ENCODE measurements at regions of chr1 and their contacts with region 1.

Region 1: DNA sequence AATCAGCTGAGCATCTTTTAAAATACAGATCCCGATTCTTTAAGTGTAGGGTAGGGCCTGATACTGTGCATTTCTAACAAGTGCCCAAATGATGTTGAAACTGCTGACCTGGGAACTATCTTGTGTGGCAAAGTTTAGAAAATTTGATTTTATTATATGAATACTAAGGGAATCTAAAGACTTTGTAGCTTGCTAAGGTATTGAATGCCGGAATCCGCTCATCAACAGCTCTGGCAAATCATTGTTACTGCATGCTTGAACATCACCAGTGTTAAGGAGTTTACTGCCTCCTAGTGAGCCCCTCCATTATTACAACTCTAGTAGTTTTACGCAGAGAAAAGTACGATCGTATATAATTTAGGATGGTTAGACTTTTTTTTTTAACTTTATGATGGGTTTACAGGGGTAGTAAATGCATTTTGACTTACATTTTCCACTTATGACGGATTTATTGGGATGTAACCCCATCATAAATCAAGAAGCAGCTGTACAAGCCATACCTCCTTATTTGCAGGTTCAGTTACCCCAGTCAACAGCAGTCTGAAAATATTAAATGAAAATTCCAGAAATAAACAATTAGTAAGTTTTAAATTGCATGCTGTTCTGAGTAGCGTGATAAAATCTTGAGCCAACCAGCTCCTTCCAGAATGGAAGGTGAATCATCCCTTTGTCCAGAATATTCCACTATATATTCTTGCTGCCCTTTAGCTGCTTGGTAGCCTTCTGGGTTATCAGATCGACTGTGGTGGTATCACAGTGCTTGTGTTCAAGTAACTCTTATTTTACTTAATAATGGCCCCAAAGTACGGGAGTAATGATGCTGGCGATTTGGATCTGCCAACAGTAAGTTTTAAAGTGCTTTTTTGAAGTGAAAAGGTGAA is 892 bp downstream of the TYW3 start:
- DNase-seq: peak; percentile 87
- H3K4me3 Mint-ChIP-seq: peak overlapping the region; percentile 96
- H3K27ac Mint-ChIP-seq: peak overlapping the region; percentile 99
- H3K4me1 Mint-ChIP-seq: peaks cover 33% of the 10 kb centered on the region
- H3K27me3 Mint-ChIP-seq: no peaks in the 10 kb centered on the region

Region 2: DNA sequence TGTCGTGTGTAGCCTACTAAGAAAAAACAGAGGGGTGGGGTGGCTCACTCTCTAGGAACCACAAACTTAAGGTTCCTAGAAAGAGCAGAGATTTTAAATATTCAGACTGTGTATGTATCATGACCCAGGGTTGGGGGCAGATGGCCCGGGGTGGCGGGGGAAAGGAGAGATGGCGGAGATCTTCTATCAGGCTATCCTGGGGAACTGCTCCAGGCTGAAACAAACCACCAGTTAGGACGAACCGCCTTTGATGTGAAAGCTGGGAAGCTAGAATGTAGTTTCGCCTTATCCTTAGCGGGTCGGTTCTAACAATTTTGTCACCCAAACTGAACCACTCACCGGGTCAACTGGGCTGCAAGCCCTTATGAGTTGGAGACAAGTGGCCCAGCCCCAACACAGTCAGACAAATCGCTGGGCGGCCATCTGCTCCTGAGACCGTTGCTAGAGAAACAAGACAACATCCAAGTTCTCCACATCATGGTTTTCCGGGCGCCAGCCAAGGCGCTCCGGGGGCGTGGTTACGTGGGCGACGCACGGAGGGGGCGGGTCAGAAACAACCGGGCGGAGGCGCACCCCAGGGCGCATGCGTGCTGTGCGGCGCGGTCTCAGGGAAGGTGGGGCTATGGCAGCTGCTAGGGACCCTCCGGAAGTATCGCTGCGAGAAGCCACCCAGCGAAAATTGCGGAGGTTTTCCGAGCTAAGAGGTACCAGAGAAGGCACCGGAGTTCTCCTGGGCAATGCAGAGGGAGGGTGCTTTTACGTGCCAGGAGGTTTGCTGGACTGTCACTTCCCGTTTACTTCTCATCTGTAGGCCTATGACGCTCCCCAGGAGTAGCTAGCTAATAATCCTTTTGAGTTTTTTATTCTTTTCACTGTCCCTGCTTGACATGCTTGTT is 535.9 kb before region 1 on chr1 and contains the starts of genes FPGT and LRRIQ3:
- intact Hi-C with region 1: loop called (anchors 2 kb)
- DNase-seq: peak; percentile 99
- H3K4me3 Mint-ChIP-seq: peak within 1 kb of the TSS; percentile 89
- H3K27ac Mint-ChIP-seq: peak within 1 kb of the TSS; percentile 93
- H3K4me1 Mint-ChIP-seq: peaks cover 19% of the 10 kb centered on the region
- H3K27me3 Mint-ChIP-seq: peaks cover 5% of the 10 kb centered on the region
- total RNA-seq, gene FPGT: 11.0 and 11.6 TPM in 2 replicates
- total RNA-seq, gene LRRIQ3: 0.17 and 0.35 TPM in 2 replicates

Region 3: DNA sequence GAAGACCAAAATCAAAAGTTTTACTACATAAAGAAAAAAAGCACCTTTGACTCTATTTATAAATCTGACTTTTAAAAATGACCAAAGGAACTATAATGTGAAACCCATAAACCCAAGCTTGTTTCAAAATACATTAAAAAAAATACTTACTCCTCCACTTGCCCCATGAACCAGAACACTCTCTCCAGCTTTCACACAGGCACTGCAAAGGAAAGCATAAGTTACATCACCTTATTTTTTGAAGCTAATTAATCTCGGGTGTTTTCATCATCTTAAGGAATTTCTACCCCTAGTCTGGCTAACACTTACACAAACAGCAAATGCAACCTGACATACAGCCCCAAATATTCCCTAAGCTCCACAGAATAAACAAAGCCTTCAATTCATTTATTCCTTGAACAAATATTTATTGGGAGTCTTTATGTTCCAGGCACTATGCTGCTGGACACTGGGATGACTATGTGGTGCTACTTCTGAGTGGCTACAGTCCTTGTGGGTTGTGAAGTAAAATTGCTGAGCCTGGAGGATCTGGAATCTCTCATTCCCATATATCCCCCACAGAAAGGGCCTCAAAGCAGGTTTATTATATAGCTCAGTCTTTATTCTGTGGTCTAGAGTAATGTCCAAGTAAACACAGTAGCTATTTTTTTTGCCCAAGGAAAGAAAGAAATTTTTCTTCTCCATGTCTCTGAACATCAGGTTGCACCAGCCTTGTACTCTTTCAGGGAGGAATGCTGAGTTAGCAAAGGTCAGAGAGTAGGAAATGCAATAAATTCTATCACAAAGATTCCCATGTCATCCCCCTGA is 19.2 kb before region 1 on chr1:
- intact Hi-C with region 1: no loop called
- DNase-seq: no peak
- H3K4me3 Mint-ChIP-seq: no peak overlapping the region
- H3K27ac Mint-ChIP-seq: no peak overlapping the region
- H3K4me1 Mint-ChIP-seq: no peaks in the 10 kb centered on the region
- H3K27me3 Mint-ChIP-seq: no peaks in the 10 kb centered on the region

Region 4: GRCh38 chr1:74763807-74764206 is 30.0 kb after region 1 on chr1:
- intact Hi-C with region 1: loop called (anchors 1 kb)
- DNase-seq: no peak
- H3K4me3 Mint-ChIP-seq: no peak overlapping the region
- H3K27ac Mint-ChIP-seq: peak overlapping the region; percentile 45
- H3K4me1 Mint-ChIP-seq: peaks cover 4% of the 10 kb centered on the region
- H3K27me3 Mint-ChIP-seq: no peaks in the 10 kb centered on the region

Region 5: DNA sequence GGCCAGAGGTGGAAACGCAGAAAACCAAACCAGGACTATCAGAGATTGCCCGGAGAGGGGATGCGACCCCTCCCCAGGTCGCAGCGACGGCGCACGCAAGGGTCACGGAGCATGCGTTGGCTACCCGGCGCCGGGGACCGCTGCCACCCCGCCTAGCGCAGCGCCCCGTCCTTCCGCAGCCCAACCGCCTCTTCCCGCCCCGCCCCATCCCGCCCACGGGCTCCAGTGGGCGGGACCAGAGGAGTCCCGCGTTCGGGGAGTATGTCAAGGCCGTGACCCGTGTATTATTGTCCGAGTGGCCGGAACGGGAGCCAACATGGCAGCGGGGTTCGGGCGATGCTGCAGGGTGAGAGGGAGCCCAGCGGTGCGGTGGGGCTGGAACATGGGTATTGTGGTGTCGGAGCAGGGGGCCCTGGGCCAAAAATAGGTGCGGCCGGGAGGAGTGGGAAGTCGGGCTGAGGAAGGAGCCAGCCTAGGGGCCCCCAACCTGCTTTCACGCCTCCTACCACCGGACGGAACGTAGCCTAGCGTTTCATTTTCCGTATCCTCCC is 990.7 kb after region 1 on chr1 and contains the start of gene ACADM:
- intact Hi-C with region 1: loop called (anchors 5 kb)
- DNase-seq: peak; percentile 97
- H3K4me3 Mint-ChIP-seq: peak within 1 kb of the TSS; percentile 100
- H3K27ac Mint-ChIP-seq: peak within 1 kb of the TSS; percentile 99
- H3K4me1 Mint-ChIP-seq: peaks cover 32% of the 10 kb centered on the region
- H3K27me3 Mint-ChIP-seq: peaks cover 3% of the 10 kb centered on the region
- total RNA-seq, gene ACADM: 55.3 and 56.7 TPM in 2 replicates

Region 6: GRCh38 chr1:75785983-75786853 is 1052.4 kb after region 1 on chr1 and contains the start of gene RABGGTB:
- intact Hi-C with region 1: loop called (anchors 5 kb)
- DNase-seq: peak; percentile 98
- H3K4me3 Mint-ChIP-seq: peak within 1 kb of the TSS; percentile 89
- H3K27ac Mint-ChIP-seq: peak within 1 kb of the TSS; percentile 96
- H3K4me1 Mint-ChIP-seq: peaks cover 30% of the 10 kb centered on the region
- H3K27me3 Mint-ChIP-seq: peaks cover 6% of the 10 kb centered on the region
- total RNA-seq, gene RABGGTB: 235 and 237 TPM in 2 replicates